CD4-positive, alpha-beta memory T cell (primary cell): ENCODE measurements at regions of chr3 and their contacts with region 1.

Region 1: DNA sequence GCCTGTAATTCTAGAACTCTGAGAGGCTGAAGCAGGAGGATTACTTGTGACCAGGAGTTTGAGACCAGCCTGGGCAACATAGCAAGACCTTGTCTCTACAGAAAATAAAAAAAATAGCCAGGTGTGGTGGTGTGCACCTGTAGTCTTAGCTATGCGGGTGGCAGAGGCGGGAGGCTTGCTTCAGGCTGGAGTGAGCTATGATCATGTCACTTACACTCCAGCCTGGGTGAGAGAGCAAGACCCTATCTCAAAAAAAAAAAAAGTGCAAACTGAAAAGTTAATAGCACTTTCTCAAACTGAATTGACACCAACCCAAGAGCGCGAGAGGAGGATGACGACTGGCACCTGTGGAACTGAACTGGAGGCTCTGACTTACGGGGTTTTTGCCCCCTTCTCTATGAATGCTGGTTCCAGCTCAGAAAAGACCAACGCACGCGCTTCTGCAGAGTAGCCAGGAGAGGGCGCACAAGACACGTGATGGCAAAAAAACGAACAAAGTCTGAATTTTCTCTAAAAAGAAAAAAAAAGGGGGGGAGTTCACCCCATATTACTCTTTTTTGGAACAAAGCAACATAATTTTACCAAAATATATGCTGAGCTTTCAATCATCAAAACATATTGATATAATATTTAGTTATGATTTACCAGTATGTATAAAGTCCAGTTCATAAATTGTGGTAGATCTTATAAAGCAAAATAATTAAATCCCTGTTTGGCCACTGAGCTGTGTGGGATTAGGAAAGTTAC is 23.7 kb downstream of the CFAP92 start:
- DNase-seq: peak; percentile 58 to 70 (median 62)
- H3K4me3 ChIP-seq: no peak overlapping the region
- H3K4me3 Mint-ChIP-seq: no peak overlapping the region
- H3K27ac ChIP-seq: no peak overlapping the region
- H3K27ac Mint-ChIP-seq: peak overlapping the region in 1 of 7 donors; percentile 19
- H3K4me1 ChIP-seq: no peaks in the 10 kb centered on the region
- H3K4me1 Mint-ChIP-seq: peaks cover 2 to 6% (median 3%) of the 10 kb centered on the region in 4 donors
- H3K27me3 ChIP-seq: no peaks in the 10 kb centered on the region
- H3K27me3 Mint-ChIP-seq: peaks cover 0 to 2% of the 10 kb centered on the region in 2 donors

Region 2: DNA sequence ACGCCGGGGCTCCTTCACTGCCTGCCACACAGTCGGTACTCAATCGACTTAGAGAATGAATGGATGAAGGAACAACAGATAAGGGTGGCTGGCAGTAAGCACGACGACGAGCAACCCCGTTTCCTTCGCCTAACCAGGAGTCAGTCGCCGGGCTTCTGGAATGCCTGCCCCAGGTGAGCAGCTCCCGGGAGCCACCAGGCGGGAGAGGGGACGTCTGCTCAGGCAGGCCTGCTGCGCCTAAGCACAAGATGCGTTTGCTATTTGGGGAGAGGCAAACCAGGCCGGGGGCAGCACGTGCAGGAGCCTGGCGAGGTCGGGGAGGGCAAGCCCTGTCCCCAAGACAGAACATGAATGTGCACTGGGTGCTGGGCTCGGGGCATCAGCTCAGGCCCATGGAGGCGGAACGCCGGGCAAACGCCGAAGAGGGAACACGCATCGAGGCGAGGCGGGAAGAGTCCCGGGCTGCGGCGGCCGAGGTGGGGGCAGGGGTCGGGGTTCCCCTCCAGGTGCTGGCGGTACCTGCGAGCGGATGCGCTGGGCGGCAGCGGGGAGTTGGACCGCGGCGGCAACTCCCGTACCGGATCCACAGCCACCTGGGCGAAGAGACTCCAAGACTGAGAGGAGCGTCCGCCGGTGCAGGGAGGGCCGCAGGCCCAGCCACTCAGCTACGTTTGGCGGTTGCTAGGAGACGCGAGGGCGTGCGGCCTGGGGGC is 23.5 kb after region 1 on chr3 and contains the start of gene CFAP92:
- CTCF ChIA-PET with region 1: interaction called, 25 read pairs
- POLR2A ChIA-PET with region 1: interaction called, 7 read pairs
- intact Hi-C with region 1: no loop called
- DNase-seq: peak; percentile 89 to 92 (median 91)
- H3K4me3 ChIP-seq: peak within 1 kb of the TSS in 1 of 2 donors; percentile 42
- H3K4me3 Mint-ChIP-seq: peak within 1 kb of the TSS; percentile 68 to 85 (median 78)
- H3K27ac ChIP-seq: peak within 1 kb of the TSS; percentile 40
- H3K27ac Mint-ChIP-seq: peak within 1 kb of the TSS; percentile 30 to 91 (median 83)
- H3K4me1 ChIP-seq: peaks cover 14% of the 10 kb centered on the region
- H3K4me1 Mint-ChIP-seq: peaks cover 5 to 28% (median 16%) of the 10 kb centered on the region in 4 donors
- H3K27me3 ChIP-seq: no peaks in the 10 kb centered on the region
- H3K27me3 Mint-ChIP-seq: no peaks in the 10 kb centered on the region
- total RNA-seq, gene CFAP92: 0.38 TPM in 1 of 2 experiments, not detected in the other

Region 3: DNA sequence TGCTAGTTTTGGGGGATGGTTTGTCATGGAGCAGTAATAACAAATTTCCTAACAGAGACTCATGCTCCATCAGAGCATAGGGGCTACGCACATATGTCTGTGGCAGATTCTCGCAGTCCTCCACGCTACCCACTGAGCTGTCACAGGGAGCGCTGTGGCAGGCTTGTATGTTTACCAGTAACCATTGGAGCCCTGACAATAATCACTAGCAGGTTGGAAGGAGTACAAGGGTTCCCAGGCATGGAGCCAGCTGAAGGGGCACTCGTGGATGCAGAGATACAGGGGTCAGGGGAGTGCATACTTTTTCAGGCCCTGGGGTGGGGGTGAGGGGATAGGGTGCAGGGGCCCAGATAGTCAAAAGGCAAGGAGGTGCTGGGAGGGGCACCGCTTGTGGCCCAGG is 82.5 kb after region 1 on chr3:
- CTCF ChIA-PET with region 1: interaction called, 82 read pairs
- POLR2A ChIA-PET with region 1: no interaction called
- intact Hi-C with region 1: loop called (anchors 1 kb)
- DNase-seq: no peak
- H3K4me3 ChIP-seq: no peak overlapping the region
- H3K4me3 Mint-ChIP-seq: no peak overlapping the region
- H3K27ac ChIP-seq: no peak overlapping the region
- H3K27ac Mint-ChIP-seq: peak overlapping the region in 3 of 7 donors; percentile 33 to 80 (median 52)
- H3K4me1 ChIP-seq: peaks cover 5% of the 10 kb centered on the region
- H3K4me1 Mint-ChIP-seq: peaks cover 6 to 8% (median 7%) of the 10 kb centered on the region in 4 donors
- H3K27me3 ChIP-seq: no peaks in the 10 kb centered on the region
- H3K27me3 Mint-ChIP-seq: no peaks in the 10 kb centered on the region

Region 4: GRCh38 chr3:129160891-129161859 is 191.0 kb after region 1 on chr3 and contains the start of gene ISY1:
- CTCF ChIA-PET with region 1: interaction called, 17 read pairs
- POLR2A ChIA-PET with region 1: interaction called, 6 read pairs
- intact Hi-C with region 1: no loop called
- DNase-seq: peak; percentile 90 to 93 (median 92)
- H3K4me3 ChIP-seq: peak within 1 kb of the TSS; percentile 75 to 94
- H3K4me3 Mint-ChIP-seq: peak within 1 kb of the TSS; percentile 96 to 100 (median 97)
- H3K27ac ChIP-seq: peak within 1 kb of the TSS; percentile 97
- H3K27ac Mint-ChIP-seq: peak within 1 kb of the TSS; percentile 98 to 100 (median 99)
- H3K4me1 ChIP-seq: peaks cover 23% of the 10 kb centered on the region
- H3K4me1 Mint-ChIP-seq: peaks cover 24 to 59% (median 37%) of the 10 kb centered on the region in 4 donors
- H3K27me3 ChIP-seq: no peaks in the 10 kb centered on the region
- H3K27me3 Mint-ChIP-seq: no peaks in the 10 kb centered on the region
- total RNA-seq, gene ISY1: 29.5 to 34.3 TPM

Region 5: DNA sequence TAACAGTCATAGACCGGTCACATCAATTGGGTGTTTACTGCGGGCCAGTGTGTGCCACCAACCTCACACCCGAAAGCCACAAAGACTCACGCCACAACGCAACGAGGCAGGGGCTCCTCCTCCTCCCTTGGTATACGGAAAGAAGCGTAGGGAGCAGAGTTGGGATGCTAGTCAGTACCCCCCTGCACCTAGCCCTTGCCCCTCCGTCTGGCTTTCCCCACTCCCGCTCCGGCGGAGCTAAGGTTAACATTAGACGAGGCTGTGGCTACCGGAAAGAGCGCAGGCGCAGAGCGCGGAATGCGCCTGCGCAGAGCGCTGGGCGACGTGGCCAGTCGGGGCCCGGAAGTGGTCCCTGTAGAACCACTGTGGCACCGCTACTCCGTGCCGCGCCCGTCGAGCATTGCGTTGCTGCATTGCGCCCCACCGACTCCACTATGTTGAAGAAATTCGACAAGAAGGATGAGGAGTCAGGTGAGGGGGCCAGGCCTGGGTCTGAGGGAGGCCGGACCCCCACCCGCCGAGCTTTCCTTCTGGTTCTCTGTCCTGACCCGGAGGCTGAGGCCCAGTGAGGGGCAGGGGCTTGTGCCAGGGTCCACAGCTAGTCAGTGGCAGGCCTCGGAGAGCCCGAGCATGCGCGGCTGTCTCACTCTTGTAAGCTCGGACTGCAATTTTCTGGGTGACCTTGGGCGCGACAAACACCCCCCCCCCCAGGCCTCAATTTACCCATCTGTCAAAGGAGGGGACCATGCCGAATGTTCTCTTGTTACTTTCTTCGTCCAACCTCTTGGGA is 279.3 kb after region 1 on chr3 and contains the start of gene COPG1:
- CTCF ChIA-PET with region 1: interaction called, 253 read pairs
- POLR2A ChIA-PET with region 1: interaction called, 16 read pairs
- intact Hi-C with region 1: loop called (anchors 1 kb)
- DNase-seq: peak; percentile 82 to 91 (median 88)
- H3K4me3 ChIP-seq: peak within 1 kb of the TSS; percentile 88 to 91
- H3K4me3 Mint-ChIP-seq: peak within 1 kb of the TSS; percentile 91 to 98 (median 96)
- H3K27ac ChIP-seq: peak within 1 kb of the TSS; percentile 92
- H3K27ac Mint-ChIP-seq: peak within 1 kb of the TSS; percentile 92 to 98 (median 97)
- H3K4me1 ChIP-seq: peaks cover 30% of the 10 kb centered on the region
- H3K4me1 Mint-ChIP-seq: peaks cover 21 to 64% (median 42%) of the 10 kb centered on the region in 4 donors
- H3K27me3 ChIP-seq: no peaks in the 10 kb centered on the region
- H3K27me3 Mint-ChIP-seq: no peaks in the 10 kb centered on the region
- total RNA-seq, gene COPG1: 147 TPM